ENCODE measurements at regions of chr5 and their contacts with region 1.

Region 1: DNA sequence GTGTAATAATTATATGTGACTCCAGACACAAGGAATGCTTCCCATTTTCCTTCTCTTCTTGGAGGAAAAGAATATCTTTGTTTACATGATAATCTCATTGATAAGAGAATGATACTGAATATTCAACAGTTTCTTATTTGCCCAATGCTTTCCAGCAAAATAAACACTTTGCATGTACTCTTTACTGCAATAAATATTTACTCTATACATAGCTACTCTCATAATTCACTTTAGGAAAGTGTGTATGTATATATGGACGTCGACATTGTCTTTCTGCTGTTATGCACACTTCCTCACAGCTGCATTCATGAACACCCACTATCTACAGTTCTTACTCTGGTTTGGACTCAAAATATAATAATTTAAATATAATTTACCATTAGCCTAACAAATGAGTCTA is 617.4 kb upstream of the CDH10 start:
- DNase-seq: no peak
- H3K4me3 ChIP-seq: no peak overlapping the region
- H3K27ac ChIP-seq: no peak overlapping the region
- H3K4me1 ChIP-seq: no peaks in the 10 kb centered on the region
- H3K27me3 ChIP-seq: no peaks in the 10 kb centered on the region
- CTCF ChIP-seq: no peak
- POLR2A ChIP-seq: no peak

Region 2: DNA sequence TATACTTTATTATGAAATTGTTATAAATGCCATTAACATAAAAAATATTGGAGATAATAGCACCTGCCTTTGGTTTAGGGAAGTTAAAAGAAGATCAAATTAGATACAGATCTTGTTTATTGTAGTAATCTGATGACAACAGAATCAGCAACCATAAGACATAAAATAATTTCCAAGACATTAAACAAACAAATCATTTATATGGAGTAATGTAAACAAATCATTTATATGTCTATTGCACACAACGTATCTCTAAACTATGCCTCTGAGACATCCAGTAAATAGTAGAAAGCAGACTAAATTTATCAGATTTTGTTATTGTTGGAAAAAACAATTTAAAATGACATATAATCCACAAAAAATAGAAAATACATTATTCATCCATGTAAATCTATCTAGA is 51.8 kb after region 1 on chr5:
- intact Hi-C with region 1: loop called (anchors 2 kb)
- DNase-seq: no peak
- H3K4me3 ChIP-seq: no peak overlapping the region
- H3K27ac ChIP-seq: no peak overlapping the region
- H3K4me1 ChIP-seq: no peaks in the 10 kb centered on the region
- H3K27me3 ChIP-seq: no peaks in the 10 kb centered on the region
- CTCF ChIP-seq: no peak
- POLR2A ChIP-seq: no peak

Measured in breast epithelium (tissue), 4 donors.